HEK293 (cell line): ENCODE measurements at regions of chr1 and their contacts with region 1.

Region 1: GRCh38 chr1:27154991-27155781 is at the start of gene SLC9A1:
- H3K4me3 ChIP-seq: peak within 1 kb of the TSS; percentile 59
- H3K27ac ChIP-seq: no peak within 1 kb of the TSS; the same call in 1 of the 2 replicates
- H3K4me1 ChIP-seq: peaks cover 4% of the 10 kb centered on the region; the same call in 1 of the 2 replicates
- CTCF ChIP-seq: peak; percentile 98

Region 2: GRCh38 chr1:27111626-27112573 is 43.3 kb before region 1 on chr1:
- CTCF ChIA-PET with region 1: interaction called, 4 read pairs
- POLR2A ChIA-PET with region 1: interaction called, 17 read pairs
- H3K4me3 ChIP-seq: no peak overlapping the region
- H3K27ac ChIP-seq: no peak overlapping the region
- H3K4me1 ChIP-seq: no peaks in the 10 kb centered on the region
- CTCF ChIP-seq: no peak

Region 3: GRCh38 chr1:27192039-27192529 is 36.9 kb after region 1 on chr1:
- CTCF ChIA-PET with region 1: interaction called, 3 read pairs
- POLR2A ChIA-PET with region 1: interaction called, 11 read pairs
- H3K4me3 ChIP-seq: no peak overlapping the region
- H3K27ac ChIP-seq: no peak overlapping the region
- H3K4me1 ChIP-seq: no peaks in the 10 kb centered on the region
- CTCF ChIP-seq: no peak

Region 4: DNA sequence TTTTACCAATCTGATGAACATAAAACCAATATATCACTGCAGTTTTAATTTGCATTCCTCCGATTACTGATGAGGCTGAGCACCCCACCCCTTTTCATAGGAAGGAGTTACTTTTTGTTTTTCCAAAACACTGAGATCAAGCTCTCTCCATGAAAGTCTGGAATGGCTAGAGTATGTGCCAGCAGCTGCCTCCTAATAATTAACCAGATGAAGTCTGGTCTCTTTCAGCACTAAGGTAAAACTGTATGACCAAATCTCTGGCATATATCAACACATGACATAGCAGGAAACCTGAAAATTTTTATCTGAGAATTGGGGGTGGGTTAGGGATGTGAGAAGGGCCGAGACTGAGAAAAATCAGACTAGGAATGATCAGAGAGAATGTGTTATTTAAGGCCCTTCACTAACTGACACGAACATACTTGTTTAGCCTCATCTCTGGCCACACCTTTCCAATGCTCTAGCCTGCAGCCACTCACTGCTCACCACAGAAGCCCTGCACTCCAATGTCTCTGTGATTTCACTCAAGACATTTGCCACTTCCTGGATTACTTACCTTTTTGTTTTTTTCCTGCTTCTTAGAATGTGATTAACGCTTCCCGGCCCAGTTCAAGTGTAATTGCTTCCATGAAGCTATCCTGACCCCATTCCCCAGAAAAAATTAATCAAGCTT is 300.1 kb after region 1 on chr1:
- CTCF ChIA-PET with region 1: no interaction called
- POLR2A ChIA-PET with region 1: no interaction called
- H3K4me3 ChIP-seq: no peak overlapping the region
- H3K27ac ChIP-seq: no peak overlapping the region
- H3K4me1 ChIP-seq: no peaks in the 10 kb centered on the region
- CTCF ChIP-seq: no peak